Activated CD4-positive, alpha-beta T cell treated with anti-CD3 and anti-CD28 coated beads, Interleukin-2, amount 10 ng/mL, durations not matched to agents 24 days and 14 days (primary cell): ENCODE measurements at regions of chr12 and their contacts with region 1.

Region 1: GRCh38 chr12:117836999-117837736 is 131.6 kb downstream of the KSR2 start:
- DNase-seq: peak; percentile 91
- H3K4me3 Mint-ChIP-seq: no peak overlapping the region
- H3K27ac Mint-ChIP-seq: no peak overlapping the region
- H3K4me1 Mint-ChIP-seq: peaks cover 5% of the 10 kb centered on the region
- H3K27me3 Mint-ChIP-seq: peaks cover 3% of the 10 kb centered on the region

Region 2: DNA sequence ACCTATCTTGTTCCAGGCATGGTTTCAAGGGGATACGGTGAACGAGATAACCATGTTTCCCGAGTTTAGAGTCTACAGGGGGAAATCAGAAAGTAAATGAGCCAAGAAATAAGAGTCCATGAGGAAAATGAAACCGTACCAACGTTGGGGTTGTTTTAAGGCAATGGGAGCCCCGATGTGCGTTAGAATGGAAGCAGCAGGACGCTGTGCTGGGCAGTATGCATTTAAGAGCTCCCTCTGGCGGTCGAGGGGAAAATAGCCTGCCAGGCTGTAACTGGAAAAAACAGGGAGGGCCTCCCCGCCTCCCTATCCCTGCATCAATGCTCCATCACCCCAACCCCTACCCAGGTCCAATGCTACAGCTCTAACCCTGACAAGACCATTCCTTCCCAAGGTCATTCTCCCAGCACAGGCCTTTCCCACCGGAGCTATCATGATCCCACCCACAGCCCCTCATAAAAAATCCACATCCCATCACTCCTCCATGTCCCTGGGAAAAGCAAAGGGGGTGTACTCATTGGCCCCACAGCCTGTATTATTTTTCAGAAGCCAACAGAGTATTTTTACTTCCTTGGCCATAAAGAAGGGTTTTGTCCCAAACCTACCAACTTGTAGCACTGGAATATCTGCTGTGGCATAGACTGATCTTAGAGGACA is 249.4 kb before region 1 on chr12:
- intact Hi-C with region 1: loop called (anchors 10 kb)
- DNase-seq: peak; percentile 81
- H3K4me3 Mint-ChIP-seq: no peak overlapping the region
- H3K27ac Mint-ChIP-seq: no peak overlapping the region
- H3K4me1 Mint-ChIP-seq: no peaks in the 10 kb centered on the region
- H3K27me3 Mint-ChIP-seq: peaks cover 5% of the 10 kb centered on the region

Region 3: GRCh38 chr12:117936722-117937484 is 99.7 kb after region 1 on chr12:
- intact Hi-C with region 1: no loop called
- DNase-seq: no peak
- H3K4me3 Mint-ChIP-seq: no peak overlapping the region
- H3K27ac Mint-ChIP-seq: no peak overlapping the region
- H3K4me1 Mint-ChIP-seq: no peaks in the 10 kb centered on the region
- H3K27me3 Mint-ChIP-seq: no peaks in the 10 kb centered on the region